ENCODE measurements at regions of chr7 and their contacts with region 1.

Region 1: DNA sequence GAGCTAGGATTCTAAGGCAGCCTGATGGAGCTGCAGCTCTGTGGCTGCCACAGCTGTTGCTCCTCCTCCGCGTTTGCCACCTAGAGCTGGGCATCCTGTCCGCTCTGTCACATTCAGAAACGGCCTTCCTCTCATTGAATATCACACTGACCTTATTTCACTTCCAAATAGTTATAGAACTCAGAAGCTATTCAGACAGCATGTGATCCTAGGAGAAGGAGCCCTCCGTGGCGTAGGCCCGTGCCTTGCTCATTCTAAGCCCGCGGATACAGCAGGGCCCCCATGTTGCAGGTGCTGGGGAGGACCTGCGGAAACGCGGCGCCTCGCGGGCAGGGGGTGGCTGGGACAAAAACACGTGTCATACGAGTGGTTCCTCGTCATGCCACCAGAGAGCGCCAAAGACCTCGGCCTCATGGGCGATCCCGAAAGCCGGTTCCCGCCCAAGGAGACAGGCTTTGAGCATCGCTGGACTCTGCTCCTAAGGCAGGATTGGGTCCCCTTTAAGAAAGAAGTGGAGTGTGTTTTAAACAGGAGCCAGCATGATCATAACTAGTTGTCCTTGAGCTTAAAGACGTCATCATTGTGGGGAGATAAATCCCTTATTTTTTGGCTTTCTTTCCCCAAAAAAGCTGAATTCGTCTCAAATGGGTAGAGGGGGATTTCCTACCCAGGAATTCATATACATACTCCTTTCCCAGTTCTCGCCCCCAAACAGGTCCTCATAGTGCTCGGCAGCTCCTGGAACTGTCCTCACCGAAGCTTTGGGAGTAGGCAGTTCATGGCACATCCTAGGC is 17.9 kb upstream of the FIGNL1 start:
- DNase-seq: peak; percentile 87
- CTCF ChIP-seq: peak; percentile 83

Region 2: DNA sequence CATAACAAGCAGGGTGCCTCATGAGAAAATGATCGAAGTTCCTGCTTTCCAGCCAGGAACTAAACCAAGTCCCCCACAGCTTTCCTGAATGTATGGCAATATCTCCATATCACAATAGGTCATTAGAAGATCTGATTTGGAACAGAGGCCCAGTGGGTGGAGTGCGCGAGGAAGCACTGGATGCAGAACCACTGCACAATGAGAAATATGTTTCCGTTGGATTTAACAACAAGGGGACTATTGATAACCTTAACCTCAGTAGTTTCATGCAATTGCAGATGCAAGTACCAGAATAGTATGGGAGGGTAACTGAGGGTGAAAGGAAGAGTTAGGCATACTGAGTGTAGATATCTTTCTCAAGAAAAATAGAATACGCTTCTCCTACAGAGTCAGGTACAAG is 420.3 kb before region 1 on chr7:
- in situ Hi-C with region 1: no loop called
- DNase-seq: no peak
- CTCF ChIP-seq: no peak

Region 3: DNA sequence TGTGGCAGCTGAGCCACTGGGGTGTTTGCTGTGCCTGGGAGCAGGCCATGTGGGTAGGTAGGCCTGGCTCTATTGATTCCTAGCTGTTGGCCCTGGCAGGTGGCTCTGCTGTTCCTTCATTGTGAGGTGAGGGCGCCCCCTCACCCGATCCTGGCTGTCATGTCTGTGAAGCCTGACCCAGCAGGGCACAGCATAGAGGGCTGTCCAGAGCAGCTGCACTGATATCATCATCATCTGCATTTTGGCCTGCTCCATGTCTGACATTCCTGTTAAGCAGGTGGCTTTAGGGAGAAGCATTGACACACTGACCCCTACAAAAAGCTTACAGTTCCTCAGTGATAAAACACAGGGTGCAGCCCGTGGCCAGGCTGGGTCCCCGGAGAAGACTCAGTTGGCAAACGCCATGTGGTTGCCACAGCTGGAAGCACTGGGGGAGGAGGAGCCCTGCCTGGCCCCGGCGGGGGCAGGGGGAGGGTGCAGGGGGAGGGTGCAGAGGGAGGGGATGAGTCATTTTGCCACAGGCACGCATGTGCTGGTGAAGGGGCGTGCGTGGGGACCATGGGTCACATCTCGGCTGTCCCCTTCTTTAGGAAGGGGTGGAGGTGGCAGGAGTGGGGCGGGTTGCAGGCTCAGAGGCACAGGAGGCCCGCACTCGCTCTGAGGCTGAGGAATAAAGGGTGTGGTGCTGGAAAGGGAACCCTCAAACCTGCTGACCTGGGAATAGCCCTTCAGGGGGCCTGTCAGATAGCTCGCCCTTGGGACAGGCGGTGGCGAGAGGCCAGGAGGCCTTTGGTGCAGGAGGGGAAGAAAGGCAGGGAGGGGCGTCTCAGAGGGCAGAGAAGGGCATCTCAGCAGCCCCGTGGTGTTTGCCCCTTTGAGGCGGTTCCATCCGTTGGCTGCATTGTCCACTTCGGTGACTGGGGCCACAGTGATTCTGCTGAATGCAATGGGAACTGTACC is 131.9 kb before region 1 on chr7:
- in situ Hi-C with region 1: no loop called
- DNase-seq: no peak
- CTCF ChIP-seq: no peak

Region 4: DNA sequence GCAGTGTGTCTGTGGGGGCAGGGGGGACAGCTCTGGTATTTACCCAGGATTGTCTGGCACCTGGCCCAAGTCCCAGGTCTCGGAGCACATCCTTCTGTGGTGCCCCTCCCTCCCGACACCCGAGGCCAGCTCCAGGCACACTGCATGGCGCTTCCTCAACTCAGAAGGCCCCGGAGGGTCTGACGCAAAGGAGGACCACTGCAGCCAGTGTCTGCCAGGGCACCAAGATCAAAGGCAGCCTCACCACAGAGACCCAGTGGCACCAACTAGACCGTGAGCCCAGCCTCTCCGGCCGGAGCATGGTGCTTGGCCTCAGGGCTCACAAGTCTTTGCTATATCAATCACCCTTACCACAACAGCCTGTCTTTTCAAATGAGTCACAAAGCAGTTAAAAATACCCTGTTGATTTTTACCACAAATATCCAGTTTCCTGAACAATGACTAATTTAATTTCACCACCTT is 196.5 kb after region 1 on chr7:
- in situ Hi-C with region 1: loop called (anchors 25 kb)
- DNase-seq: peak; percentile 60
- CTCF ChIP-seq: no peak

Region 5: DNA sequence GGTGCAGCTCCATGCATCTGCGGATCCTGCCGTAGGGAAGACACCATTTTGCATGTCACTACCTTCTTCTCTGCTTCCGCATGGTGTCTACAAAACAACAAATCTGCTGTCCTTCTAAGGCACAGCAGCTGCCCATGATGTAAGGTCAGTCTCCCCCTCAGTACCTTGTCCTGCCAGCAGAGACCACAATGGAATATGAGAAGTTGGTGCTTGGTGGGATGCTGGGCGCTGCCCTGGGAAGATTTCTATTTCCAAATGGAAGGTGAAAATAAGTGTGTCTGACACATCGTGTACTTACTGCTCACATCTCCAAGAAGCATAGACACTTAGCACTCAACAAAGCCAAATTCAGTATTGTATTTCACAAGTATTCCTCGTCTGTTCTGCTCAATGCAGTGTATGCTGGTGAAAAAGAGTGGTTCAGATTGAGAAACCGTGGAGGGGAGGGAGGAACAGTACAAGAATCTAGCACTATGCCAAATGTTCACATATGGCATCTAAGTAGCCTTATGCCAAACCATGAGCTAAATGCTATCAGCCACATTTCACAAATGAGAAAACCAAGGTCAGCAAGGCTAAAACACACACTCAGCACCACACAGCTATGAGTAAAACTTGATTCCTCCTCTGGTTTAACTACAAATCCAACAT is 219.7 kb after region 1 on chr7:
- in situ Hi-C with region 1: no loop called
- DNase-seq: no peak
- CTCF ChIP-seq: no peak

Region 6: DNA sequence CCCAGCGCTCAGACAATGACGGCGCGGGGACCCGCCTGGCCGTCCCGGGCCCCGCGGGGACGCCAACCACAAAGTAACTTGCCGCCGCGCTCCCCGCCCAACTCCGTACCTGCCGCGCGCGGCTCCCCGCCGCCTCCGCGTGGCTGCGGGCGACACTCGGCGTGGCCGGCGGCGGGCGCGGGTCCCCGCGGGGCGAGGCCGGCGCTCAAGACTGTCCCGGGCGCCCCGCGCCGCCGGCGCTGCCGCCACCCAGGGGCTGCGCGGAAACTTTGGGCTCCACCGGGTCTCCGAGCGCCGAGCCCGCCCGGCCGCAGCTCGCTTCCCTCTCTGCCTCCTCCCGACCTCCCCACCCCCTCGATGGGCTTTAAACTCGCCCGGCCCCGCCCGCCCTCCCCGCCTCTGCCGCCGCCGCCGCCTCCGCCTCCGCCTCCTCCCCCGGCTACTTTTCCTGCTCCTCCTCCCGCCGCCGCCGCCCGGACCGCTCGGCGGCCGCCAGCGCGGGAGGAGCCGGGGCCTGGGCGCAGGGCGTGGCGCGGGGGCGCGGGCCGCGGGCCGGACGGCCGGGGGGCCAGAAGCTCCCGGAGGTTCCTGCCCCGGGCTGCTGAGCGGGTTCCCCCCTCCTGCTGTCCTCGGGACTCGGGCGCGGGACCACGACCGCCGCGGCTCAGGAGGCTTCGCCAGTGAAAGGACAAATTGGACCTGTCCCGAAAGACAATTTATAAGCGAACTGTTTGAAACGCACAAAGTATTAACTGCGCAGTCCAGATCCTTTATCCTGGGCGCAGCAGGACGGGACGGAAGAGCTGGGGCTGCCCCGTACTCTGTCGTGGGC is 325.3 kb after region 1 on chr7:
- in situ Hi-C with region 1: no loop called
- DNase-seq: peak; percentile 34
- CTCF ChIP-seq: no peak

Region 7: DNA sequence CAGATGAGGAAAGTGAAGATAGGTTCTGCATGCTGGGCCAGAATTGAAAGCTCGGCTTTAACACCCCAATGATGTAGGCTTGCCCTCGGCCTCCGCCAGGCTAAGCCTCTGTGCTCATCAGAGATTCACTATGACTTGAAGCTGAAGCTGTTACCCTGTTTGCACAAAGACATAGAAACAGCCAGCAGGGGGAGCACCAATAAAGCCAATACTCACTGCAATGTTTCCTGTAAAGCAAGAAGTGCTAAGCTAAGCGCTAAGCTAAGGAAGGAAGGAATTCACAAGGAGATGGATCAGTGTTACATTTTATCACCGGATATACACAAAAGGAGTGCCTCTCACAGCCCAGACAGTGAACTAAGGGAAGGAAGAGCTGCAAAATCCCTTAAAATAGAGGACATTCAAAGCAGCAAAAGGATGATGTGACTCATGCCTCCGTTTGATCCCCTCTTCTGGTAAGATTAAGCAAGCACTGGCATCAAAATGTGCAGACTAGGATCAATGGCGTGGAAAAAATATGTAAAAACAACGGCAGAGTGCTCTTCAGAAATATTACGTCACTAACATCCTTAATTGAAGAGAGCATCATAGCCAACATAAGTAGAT is 694.8 kb after region 1 on chr7:
- in situ Hi-C with region 1: loop called (anchors 25 kb)
- DNase-seq: peak; percentile 58
- CTCF ChIP-seq: peak; percentile 66

Measured in GM13976 (cell line).